Breast epithelium (tissue), 4 donors: ENCODE measurements at regions of chr18 and their contacts with region 1.

Region 1: DNA sequence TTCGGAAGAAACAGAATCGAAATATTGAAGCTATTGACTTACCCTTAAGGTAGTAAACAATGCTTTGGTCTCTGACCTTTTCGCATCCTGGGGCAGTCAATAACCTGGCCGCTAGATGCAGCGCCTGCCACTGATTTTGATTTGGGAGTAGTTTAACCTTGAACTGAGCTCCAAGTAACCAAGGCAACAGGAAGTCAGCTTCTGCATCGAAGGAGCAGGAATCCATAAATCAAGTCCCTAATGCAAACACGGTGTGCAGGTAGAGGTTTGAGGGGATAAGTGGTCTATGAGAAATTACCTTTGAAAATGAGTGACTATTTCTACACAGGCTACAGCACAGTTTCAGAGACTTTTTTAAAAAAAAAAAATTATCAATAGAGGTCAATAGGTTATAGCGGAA is 353.5 kb downstream of the SETBP1 start:
- DNase-seq: no peak
- H3K4me3 ChIP-seq: no peak overlapping the region
- H3K27ac ChIP-seq: no peak overlapping the region
- H3K4me1 ChIP-seq: no peaks in the 10 kb centered on the region
- H3K27me3 ChIP-seq: no peaks in the 10 kb centered on the region
- CTCF ChIP-seq: no peak
- POLR2A ChIP-seq: no peak

Region 2: DNA sequence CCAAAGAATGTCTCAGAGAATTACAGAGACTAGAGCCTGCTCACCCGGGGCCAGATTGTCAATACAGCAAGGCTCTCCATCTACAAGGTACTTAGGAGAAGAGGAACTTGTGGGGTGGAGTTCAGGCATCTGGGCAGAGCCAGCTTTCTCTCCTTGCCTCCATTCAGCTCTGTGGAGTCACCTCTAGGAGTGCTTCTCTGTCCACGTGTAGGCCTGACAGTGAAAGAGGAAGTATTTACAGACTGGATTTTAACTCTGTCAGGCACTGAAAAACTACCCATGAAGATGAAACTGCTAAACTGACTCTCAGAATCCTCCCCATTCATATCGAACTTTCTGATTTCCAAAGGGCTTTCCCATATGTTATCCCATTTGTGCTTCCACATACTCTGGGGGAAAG is 37.9 kb before region 1 on chr18:
- intact Hi-C with region 1: loop called (anchors 2 kb)
- DNase-seq: no peak
- H3K4me3 ChIP-seq: no peak overlapping the region
- H3K27ac ChIP-seq: no peak overlapping the region
- H3K4me1 ChIP-seq: no peaks in the 10 kb centered on the region
- H3K27me3 ChIP-seq: no peaks in the 10 kb centered on the region
- CTCF ChIP-seq: no peak
- POLR2A ChIP-seq: no peak

Region 3: GRCh38 chr18:45008694-45009413 is 25.3 kb before region 1 on chr18:
- intact Hi-C with region 1: no loop called
- DNase-seq: peak in 1 of 2 donors; percentile 41
- H3K4me3 ChIP-seq: no peak overlapping the region
- H3K27ac ChIP-seq: peak overlapping the region; percentile 3 to 40
- H3K4me1 ChIP-seq: peaks cover 0 to 3% of the 10 kb centered on the region in 2 donors
- H3K27me3 ChIP-seq: no peaks in the 10 kb centered on the region
- CTCF ChIP-seq: no peak
- POLR2A ChIP-seq: no peak